ENCODE measurements at regions of chr11 and their contacts with region 1.

Region 1: DNA sequence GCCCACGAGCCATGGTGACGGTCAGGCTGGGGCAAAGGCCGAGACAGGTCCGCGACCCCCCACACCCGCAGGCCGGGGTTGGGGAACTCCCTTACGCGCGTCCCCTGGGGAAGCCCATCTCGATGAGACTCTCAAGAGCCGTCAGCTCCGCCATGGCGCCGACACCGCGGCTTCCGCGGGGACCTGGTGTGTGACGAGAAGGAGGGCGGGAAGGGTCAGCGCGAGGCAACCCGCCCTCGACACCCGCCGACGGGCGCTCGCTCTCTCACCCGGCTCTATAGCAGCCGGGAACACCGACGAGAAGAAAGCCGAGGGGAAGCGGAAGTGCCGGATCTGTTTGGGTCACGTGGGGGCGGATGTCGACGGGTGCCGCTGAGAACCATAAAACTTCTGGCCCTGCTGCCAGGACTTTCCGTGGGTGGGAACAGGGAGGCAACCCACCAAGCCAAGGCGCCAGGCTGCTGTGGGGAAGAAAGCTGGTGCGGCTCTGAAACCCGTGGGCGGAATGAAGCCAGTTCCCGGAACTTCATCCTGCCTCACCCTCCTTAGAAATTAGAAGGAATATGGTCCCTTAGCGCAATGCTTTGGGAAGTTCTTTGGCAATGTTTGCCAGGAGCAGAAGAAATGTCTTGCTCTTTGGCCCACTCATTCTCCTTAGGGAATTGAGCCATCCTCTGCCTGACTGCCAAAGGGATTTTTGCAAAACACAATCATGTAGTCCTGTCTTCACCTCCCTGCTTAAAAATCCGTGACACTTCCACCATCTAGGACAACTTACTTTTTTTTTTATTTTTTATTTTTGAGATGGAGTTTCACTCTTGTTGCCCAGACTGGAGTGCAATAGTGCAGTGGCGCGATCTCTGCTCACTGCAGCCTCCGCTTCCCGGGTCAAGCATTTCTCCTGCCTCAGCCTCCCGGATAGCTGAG is at the start of gene UBXN1:
- DNase-seq: peak; percentile 93
- H3K4me3 ChIP-seq: peak within 1 kb of the TSS; percentile 79 to 98
- H3K27ac ChIP-seq: peak within 1 kb of the TSS; percentile 70 to 77; a peak in 3 of 4 replicates
- H3K4me1 ChIP-seq: peaks cover 11 to 15% of the 10 kb centered on the region in 2 experiments; a peak in 3 of 4 replicates
- H3K27me3 ChIP-seq: no peaks in the 10 kb centered on the region
- CTCF ChIP-seq: no peak
- EP300 ChIP-seq: peak in 1 of 2 experiments; percentile 15; a peak in 2 of 4 replicates
- RAD21 ChIP-seq: no peak
- polyA plus RNA-seq, gene UBXN1: 202 and 256 TPM in 2 replicates

Region 2: GRCh38 chr11:62694455-62695167 is 15.6 kb after region 1 on chr11:
- CTCF ChIA-PET with region 1: interaction called, 31 read pairs
- POLR2A ChIA-PET with region 1: interaction called, 3 read pairs
- DNase-seq: peak; percentile 81
- H3K4me3 ChIP-seq: peak overlapping the region in 1 of 2 experiments; percentile 31; a peak in 1 of 4 replicates
- H3K27ac ChIP-seq: peak overlapping the region; percentile 23 to 27; a peak in 2 of 4 replicates
- H3K4me1 ChIP-seq: peaks cover 3 to 4% of the 10 kb centered on the region in 2 experiments; a peak in 3 of 4 replicates
- H3K27me3 ChIP-seq: no peaks in the 10 kb centered on the region
- CTCF ChIP-seq: peak; percentile 87
- EP300 ChIP-seq: no peak
- RAD21 ChIP-seq: peak; percentile 68

Region 3: DNA sequence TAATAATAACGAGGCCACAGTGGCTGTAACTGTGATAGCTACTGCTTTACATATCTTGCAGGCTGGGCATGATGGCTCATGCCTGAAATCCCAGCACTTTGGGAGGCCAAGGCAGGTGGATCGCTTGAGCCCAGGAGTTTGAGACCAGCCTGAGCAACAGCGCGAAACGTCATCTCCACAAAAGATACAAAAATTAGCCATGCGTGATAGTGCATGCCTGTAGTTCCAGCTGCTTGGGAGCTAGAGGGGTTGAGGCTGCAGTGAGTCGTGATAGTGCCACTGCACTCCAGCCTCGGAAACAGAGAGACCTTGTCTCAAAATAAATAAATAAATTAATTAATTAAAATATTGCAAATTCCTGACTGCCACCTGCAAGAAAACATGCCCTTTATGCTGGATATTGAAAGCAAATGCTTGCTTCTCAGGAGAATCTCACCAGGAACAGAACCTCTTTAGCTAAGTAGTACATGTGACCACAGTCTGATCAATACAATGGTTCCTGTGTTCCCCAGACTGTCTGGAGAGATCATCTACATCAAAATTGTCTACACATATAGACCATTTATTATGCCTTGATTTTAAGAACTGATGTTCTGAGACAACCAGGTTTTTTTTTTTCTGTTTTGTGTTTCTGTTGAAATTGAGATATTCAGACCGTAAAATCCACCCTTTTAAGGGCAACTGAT is 68.6 kb after region 1 on chr11:
- CTCF ChIA-PET with region 1: no interaction called
- POLR2A ChIA-PET with region 1: no interaction called
- DNase-seq: no peak
- H3K4me3 ChIP-seq: no peak overlapping the region
- H3K27ac ChIP-seq: peak overlapping the region in 1 of 2 experiments; percentile 20; a peak in 1 of 4 replicates
- H3K4me1 ChIP-seq: peaks cover 0 to 3% of the 10 kb centered on the region in 2 experiments; a peak in 1 of 4 replicates
- H3K27me3 ChIP-seq: no peaks in the 10 kb centered on the region
- CTCF ChIP-seq: no peak
- EP300 ChIP-seq: no peak
- RAD21 ChIP-seq: no peak